CD4-positive, alpha-beta memory T cell (primary cell): ENCODE measurements at regions of chr16 and their contacts with region 1.

Region 1: DNA sequence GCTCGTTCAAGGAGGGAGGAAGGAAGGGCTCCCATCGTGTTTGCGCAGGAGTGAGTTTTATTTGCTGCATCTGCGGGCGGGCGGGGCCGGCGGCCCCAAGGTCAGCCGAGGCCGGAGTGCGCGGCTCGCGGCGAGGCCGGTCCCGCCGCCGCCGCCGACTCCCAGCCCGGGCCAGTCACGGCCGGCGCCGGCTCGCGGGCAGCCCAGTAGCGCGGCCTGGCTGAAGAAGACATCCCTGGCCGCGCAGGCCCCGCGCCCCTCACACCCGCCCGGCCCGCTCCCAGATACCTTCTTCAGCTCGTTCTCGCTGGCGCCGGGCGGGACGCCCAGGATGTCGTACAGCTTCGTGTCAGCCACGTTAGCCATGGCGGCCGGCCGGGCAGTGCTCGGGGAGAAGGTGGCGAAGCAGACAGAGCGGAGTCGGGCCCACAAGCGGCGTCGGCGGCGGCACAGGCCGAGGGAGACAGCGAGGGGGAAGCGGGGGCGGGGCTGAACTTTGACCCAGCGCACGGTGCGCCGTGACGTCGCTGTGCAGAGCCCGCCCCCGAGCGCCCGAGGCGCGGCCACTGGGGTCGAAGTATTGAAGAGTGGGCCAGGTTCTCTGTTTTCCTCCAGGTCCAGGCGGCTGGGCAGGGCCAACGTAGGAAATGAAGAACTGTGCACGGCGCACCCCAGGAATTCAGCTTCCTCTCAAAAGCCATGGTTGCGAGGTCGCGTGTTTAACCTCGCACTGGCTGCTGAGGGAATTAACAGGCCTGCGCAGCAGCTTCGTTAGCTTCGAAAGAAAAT is at the start of gene DNAJA2:
- DNase-seq: peak; percentile 87 to 92 (median 91)
- H3K4me3 ChIP-seq: peak within 1 kb of the TSS; percentile 85 to 95
- H3K4me3 Mint-ChIP-seq: peak within 1 kb of the TSS; percentile 92 to 98 (median 95)
- H3K27ac ChIP-seq: peak within 1 kb of the TSS; percentile 91
- H3K27ac Mint-ChIP-seq: peak within 1 kb of the TSS; percentile 95 to 100 (median 99)
- H3K4me1 ChIP-seq: peaks cover 64% of the 10 kb centered on the region
- H3K4me1 Mint-ChIP-seq: peaks cover 35 to 74% (median 54%) of the 10 kb centered on the region in 4 donors
- H3K27me3 ChIP-seq: no peaks in the 10 kb centered on the region
- H3K27me3 Mint-ChIP-seq: no peaks in the 10 kb centered on the region
- total RNA-seq, gene DNAJA2: 73.2 to 79.5 TPM

Region 2: GRCh38 chr16:46621006-46621933 is 352.1 kb before region 1 on chr16 and contains the start of gene SHCBP1:
- CTCF ChIA-PET with region 1: no interaction called
- POLR2A ChIA-PET with region 1: no interaction called
- intact Hi-C with region 1: loop called (anchors 5 kb)
- DNase-seq: peak; percentile 60 to 68 (median 63)
- H3K4me3 ChIP-seq: peak within 1 kb of the TSS; percentile 53 to 73
- H3K4me3 Mint-ChIP-seq: peak within 1 kb of the TSS; percentile 89 to 94 (median 90)
- H3K27ac ChIP-seq: no peak within 1 kb of the TSS
- H3K27ac Mint-ChIP-seq: peak within 1 kb of the TSS; percentile 59 to 87 (median 77)
- H3K4me1 ChIP-seq: peaks cover 16% of the 10 kb centered on the region
- H3K4me1 Mint-ChIP-seq: peaks cover 17 to 21% (median 17%) of the 10 kb centered on the region in 4 donors
- H3K27me3 ChIP-seq: no peaks in the 10 kb centered on the region
- H3K27me3 Mint-ChIP-seq: no peaks in the 10 kb centered on the region
- total RNA-seq, gene SHCBP1: 0.36 to 0.55 TPM

Region 3: DNA sequence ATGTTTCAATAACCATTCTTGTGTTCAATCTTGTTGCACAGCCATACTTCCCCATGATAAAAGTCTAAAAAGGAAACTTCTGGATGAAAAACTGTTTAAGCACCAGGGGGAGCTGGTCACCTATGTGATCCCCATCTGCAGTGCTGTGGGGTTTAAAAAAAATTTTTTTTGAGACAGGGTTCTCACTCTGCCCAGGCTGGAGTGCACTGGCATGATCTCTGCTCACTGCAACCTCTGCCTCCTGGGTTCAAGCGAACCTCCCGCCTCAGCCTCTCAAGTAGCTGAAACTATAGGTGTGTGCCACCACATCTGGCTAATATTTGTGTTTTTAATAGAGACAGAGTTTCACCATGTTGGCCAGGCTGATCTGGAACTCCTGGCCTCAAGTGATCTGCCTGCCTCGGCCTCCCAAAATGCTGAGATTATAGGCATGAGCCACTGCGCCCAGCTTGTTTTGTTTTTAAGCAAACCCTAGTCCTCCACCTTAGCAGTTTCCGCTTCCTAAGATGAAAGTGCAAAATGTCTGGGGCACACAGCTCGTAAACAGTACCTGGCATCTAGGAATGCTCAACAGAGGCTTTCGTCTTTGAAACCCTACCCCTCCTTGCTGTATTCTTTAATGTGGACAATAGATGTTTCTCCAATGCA is 25.4 kb before region 1 on chr16:
- CTCF ChIA-PET with region 1: interaction called, 5 read pairs
- POLR2A ChIA-PET with region 1: interaction called, 11 read pairs
- intact Hi-C with region 1: no loop called
- DNase-seq: peak in 4 of 5 donors; percentile 47 to 54 (median 50)
- H3K4me3 ChIP-seq: no peak overlapping the region
- H3K4me3 Mint-ChIP-seq: peak overlapping the region in 2 of 8 donors; percentile 4 to 46
- H3K27ac ChIP-seq: no peak overlapping the region
- H3K27ac Mint-ChIP-seq: peak overlapping the region in 6 of 7 donors; percentile 29 to 68 (median 52)
- H3K4me1 ChIP-seq: peaks cover 15% of the 10 kb centered on the region
- H3K4me1 Mint-ChIP-seq: peaks cover 8 to 27% (median 15%) of the 10 kb centered on the region in 4 donors
- H3K27me3 ChIP-seq: no peaks in the 10 kb centered on the region
- H3K27me3 Mint-ChIP-seq: no peaks in the 10 kb centered on the region

Region 4: DNA sequence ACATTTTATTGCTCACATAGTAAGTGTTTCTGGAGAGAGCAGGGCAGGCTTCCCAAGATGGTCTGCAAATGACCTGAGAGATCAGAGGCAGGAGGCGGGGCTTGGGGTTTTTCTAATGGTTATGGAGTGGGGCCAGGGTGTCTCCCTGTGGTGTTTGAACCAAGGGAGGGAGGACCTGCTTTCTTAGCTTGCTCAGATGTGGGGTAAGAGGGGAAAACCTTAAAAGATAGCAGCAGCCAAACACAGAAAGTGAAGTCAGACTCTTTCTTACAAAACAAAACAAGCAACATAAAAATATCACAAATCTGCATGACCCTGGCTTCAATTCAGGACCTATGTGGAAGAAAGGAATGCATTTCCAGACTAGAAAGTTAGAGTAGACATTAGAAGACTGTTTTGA is 23.0 kb after region 1 on chr16:
- CTCF ChIA-PET with region 1: no interaction called
- POLR2A ChIA-PET with region 1: no interaction called
- intact Hi-C with region 1: no loop called
- DNase-seq: no peak
- H3K4me3 ChIP-seq: no peak overlapping the region
- H3K4me3 Mint-ChIP-seq: no peak overlapping the region
- H3K27ac ChIP-seq: no peak overlapping the region
- H3K27ac Mint-ChIP-seq: peak overlapping the region in 1 of 7 donors; percentile 61
- H3K4me1 ChIP-seq: no peaks in the 10 kb centered on the region
- H3K4me1 Mint-ChIP-seq: peaks cover 0 to 4% (median 0%) of the 10 kb centered on the region in 4 donors
- H3K27me3 ChIP-seq: no peaks in the 10 kb centered on the region
- H3K27me3 Mint-ChIP-seq: no peaks in the 10 kb centered on the region

Region 5: GRCh38 chr16:47037746-47038458 is 64.5 kb after region 1 on chr16:
- CTCF ChIA-PET with region 1: interaction called, 13 read pairs
- POLR2A ChIA-PET with region 1: interaction called, 16 read pairs
- intact Hi-C with region 1: loop called (anchors 1 kb)
- DNase-seq: peak; percentile 81 to 89 (median 85)
- H3K4me3 ChIP-seq: peak overlapping the region; percentile 61 to 67
- H3K4me3 Mint-ChIP-seq: peak overlapping the region; percentile 68 to 85 (median 80)
- H3K27ac ChIP-seq: peak overlapping the region; percentile 45
- H3K27ac Mint-ChIP-seq: peak overlapping the region in 4 of 7 donors; percentile 8 to 71 (median 42)
- H3K4me1 ChIP-seq: no peaks in the 10 kb centered on the region
- H3K4me1 Mint-ChIP-seq: peaks cover 0 to 8% (median 5%) of the 10 kb centered on the region in 4 donors
- H3K27me3 ChIP-seq: no peaks in the 10 kb centered on the region
- H3K27me3 Mint-ChIP-seq: no peaks in the 10 kb centered on the region

Region 6: DNA sequence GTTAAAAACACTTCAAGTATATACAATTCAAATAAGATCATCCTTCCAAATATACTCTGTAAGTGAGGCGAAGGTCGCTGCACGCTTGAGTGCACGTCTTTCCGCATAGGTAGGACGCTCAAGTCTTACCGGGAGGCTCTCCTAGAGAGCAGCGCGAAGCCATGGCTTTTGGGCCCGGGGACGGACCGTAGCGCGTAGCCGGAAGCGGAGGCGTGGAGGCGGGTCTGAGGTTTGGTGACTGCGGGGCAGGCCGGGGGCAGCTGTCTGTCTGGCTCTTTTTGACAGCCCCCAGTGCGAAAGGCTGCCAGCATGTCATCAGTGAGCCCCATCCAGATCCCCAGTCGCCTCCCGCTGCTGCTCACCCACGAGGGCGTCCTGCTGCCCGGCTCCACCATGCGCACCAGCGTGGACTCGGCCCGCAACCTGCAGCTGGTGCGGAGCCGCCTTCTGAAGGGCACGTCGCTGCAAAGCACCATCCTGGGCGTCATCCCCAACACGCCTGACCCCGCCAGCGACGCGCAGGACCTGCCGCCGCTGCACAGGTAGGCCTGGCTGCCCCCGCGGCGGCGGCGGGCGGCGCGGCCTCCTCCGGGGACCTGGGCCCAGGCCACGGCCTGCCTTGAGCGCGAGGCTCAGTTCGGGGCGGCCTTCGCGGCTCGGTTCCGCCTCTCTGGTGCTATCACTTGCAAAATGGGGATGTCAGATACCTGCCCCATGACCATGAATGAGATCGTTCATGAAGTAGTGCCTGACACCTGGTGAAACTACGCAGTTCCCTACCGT is 1270.9 kb after region 1 on chr16 and contains the start of gene LONP2:
- CTCF ChIA-PET with region 1: no interaction called
- POLR2A ChIA-PET with region 1: interaction called, 8 read pairs
- intact Hi-C with region 1: loop called (anchors 2 kb)
- DNase-seq: peak; percentile 91 to 93 (median 92)
- H3K4me3 ChIP-seq: peak within 1 kb of the TSS; percentile 91 to 94
- H3K4me3 Mint-ChIP-seq: peak within 1 kb of the TSS; percentile 88 to 98 (median 94)
- H3K27ac ChIP-seq: peak within 1 kb of the TSS; percentile 70
- H3K27ac Mint-ChIP-seq: peak within 1 kb of the TSS; percentile 86 to 98 (median 95)
- H3K4me1 ChIP-seq: peaks cover 45% of the 10 kb centered on the region
- H3K4me1 Mint-ChIP-seq: peaks cover 28 to 52% (median 43%) of the 10 kb centered on the region in 4 donors
- H3K27me3 ChIP-seq: no peaks in the 10 kb centered on the region
- H3K27me3 Mint-ChIP-seq: no peaks in the 10 kb centered on the region
- total RNA-seq, gene LONP2: 96.2 to 101 TPM